ENCODE measurements at regions of chr18 and their contacts with region 1.

Region 1: DNA sequence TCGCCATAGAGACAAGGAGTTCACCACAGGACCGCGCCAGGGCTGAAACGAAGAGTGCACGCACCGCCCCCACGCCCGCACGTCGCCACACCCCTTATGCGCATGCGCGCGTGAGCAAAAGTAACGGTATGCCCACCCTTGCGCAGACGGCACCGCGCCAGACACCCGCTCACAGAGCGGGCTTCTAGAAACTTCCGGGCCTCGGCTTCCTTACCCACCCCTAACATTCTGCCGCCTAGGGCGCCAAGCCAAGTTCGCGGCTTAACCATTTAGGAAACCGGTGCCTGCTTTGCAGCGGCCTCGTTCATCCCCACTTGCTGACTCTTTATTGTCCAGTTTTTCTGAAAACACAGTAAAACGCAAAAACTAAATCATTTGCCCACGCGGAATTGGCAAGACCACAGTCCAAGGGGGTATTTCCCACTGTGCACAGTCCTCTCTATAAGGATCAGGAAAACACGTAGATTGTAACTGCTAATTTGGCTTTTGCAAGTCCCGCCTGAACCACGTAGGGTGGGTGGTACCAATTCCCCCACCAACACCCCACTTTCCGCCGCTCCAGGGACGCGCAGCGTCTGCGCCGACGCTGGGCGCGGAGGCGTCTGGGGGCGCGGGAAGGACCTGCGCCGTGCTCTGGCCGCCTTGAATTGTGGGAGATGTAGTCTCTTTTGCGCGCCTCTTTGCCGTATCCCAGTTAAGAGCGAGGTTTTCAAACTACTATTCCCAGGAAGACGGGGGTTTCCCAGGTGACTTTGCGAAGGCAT is at the starts of genes FBXO15 and TIMM21:
- DNase-seq: peak; percentile 94
- H3K4me3 Mint-ChIP-seq: peak within 1 kb of the TSS; percentile 92
- H3K27ac Mint-ChIP-seq: peak within 1 kb of the TSS; percentile 96
- H3K4me1 Mint-ChIP-seq: peaks cover 51% of the 10 kb centered on the region
- H3K27me3 Mint-ChIP-seq: peaks cover 8% of the 10 kb centered on the region
- total RNA-seq, gene FBXO15: 0.83 and 1.0 TPM in 2 replicates
- total RNA-seq, gene TIMM21: 54.1 and 60.2 TPM in 2 replicates

Region 2: DNA sequence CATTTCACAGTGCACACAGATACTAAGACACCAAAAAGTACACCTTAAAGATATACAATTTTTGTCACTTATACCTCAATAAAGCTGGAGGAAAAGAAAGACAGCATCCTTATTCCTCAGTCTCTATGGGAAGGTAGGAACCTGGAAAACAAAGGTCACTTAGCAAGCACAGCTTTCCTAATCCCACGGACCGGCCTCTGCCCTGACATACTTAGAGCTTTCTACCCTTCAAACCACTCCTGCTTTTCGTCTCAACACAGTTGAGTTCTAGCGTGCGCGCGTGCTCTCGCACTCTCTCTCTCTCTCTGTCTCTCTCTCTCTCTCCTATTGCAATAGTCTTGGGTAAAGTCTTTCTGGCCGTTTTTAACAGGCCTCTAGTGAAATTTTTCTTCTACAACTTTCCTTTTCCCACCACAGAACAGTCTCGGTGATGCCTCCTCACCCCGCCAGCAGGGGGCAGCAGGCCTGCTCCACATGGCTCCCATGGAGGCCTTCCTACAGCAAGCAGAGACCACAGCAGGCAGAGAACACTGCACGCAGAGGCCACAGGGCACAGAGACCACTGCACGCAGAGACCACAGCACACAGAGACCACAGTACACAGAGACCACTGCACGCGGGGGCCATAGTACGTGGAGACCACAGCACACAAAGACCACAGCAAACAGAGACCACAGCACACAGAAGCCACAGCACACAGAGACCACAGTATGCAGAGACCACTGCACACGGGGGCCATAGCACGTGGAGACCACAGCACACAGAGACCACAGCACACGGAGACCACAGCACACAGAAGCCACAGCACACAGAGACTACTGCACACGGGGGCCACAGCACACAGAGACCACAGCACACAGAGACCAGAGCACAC is 107.3 kb before region 1 on chr18:
- intact Hi-C with region 1: loop called (anchors 1 kb)
- DNase-seq: peak; percentile 62
- H3K4me3 Mint-ChIP-seq: no peak overlapping the region
- H3K27ac Mint-ChIP-seq: no peak overlapping the region
- H3K4me1 Mint-ChIP-seq: no peaks in the 10 kb centered on the region
- H3K27me3 Mint-ChIP-seq: no peaks in the 10 kb centered on the region

Region 3: DNA sequence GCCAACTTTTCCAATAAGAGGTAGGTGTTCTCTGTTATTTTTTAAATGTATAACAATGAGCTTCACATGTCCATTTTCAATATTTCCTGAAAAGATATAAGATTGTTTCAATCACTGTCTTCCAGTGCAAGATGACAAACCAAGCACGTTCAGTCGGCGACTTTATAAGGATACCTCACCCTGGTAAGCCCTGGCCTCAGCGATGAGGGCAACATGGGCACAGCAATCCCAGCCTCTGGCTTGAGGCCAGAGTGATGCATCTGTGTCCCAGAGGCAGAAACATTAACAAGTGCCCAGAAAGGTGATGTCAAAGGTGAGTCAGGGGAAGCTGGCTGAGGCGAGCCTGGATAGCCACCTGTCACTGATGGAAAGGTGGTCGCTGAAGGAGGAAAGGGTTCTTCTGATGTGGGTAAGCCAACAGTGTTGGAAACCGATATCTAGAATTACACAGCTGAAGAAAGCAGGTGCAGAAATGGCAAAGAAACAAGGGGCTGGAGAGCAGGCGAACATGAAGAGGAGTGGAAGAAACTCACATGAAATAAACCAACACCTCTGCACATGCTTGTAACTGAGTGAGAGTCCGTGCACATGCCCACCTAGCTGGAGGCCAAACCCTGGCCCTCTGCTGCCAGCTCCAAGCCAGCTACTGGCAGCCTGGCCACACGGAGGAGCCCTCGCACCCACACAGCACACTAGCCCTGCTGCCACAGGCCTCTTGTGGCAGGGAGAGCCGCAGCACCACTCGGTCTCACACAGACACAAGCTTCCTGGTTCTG is 65.8 kb before region 1 on chr18:
- intact Hi-C with region 1: loop called (anchors 1 kb)
- DNase-seq: peak; percentile 63
- H3K4me3 Mint-ChIP-seq: peak overlapping the region; percentile 85
- H3K27ac Mint-ChIP-seq: peak overlapping the region; percentile 97
- H3K4me1 Mint-ChIP-seq: peaks cover 24% of the 10 kb centered on the region
- H3K27me3 Mint-ChIP-seq: peaks cover 5% of the 10 kb centered on the region

Region 4: GRCh38 chr18:74196220-74197119 is 48.5 kb after region 1 on chr18:
- intact Hi-C with region 1: loop called (anchors 1 kb)
- DNase-seq: peak; percentile 17
- H3K4me3 Mint-ChIP-seq: peak overlapping the region; percentile 68
- H3K27ac Mint-ChIP-seq: no peak overlapping the region
- H3K4me1 Mint-ChIP-seq: peaks cover 7% of the 10 kb centered on the region
- H3K27me3 Mint-ChIP-seq: peaks cover 5% of the 10 kb centered on the region

Region 5: DNA sequence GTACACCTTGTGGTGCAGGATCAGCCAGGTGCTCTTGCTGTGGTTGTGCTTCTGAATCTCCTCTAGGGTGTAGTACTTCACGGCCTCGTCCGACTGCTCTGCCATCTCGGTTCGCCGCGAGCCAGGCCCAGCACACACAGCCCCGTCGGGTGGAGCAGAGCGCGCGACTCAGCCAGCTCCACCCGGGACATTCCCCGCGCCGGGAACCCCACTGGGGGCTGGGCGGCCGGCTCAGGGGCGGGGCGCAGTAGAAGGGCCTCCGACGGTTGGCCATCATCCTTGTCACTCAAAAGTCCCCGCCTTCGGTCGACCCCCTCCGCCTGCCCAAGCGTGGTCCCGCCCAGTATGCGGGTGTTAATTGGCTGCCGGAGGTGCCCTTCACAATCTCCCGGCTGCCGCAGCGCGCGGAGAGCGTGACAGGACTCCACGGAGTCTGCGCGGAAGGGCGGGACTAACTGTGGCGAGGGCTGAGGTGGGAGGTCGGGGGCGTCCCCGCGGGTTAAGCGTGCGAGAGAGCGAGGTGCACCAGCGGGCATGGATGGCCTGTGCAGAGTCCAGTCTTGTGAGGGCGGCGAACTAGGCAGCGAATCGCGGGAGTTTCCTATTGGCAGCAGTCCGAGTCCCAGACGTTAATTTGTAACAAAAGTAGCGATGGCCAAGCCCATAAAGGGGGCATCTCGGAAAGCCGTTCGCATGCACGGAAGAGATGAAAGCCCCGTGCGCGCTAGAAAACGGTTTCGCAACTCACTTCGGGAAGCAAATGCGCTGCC is 144.0 kb after region 1 on chr18 and contains the start of gene CYB5A:
- intact Hi-C with region 1: loop called (anchors 1 kb)
- DNase-seq: peak; percentile 97
- H3K4me3 Mint-ChIP-seq: no peak within 1 kb of the TSS
- H3K27ac Mint-ChIP-seq: peak within 1 kb of the TSS; percentile 90
- H3K4me1 Mint-ChIP-seq: peaks cover 14% of the 10 kb centered on the region
- H3K27me3 Mint-ChIP-seq: peaks cover 17% of the 10 kb centered on the region
- total RNA-seq, gene CYB5A: 36.0 and 40.5 TPM in 2 replicates

Region 6: DNA sequence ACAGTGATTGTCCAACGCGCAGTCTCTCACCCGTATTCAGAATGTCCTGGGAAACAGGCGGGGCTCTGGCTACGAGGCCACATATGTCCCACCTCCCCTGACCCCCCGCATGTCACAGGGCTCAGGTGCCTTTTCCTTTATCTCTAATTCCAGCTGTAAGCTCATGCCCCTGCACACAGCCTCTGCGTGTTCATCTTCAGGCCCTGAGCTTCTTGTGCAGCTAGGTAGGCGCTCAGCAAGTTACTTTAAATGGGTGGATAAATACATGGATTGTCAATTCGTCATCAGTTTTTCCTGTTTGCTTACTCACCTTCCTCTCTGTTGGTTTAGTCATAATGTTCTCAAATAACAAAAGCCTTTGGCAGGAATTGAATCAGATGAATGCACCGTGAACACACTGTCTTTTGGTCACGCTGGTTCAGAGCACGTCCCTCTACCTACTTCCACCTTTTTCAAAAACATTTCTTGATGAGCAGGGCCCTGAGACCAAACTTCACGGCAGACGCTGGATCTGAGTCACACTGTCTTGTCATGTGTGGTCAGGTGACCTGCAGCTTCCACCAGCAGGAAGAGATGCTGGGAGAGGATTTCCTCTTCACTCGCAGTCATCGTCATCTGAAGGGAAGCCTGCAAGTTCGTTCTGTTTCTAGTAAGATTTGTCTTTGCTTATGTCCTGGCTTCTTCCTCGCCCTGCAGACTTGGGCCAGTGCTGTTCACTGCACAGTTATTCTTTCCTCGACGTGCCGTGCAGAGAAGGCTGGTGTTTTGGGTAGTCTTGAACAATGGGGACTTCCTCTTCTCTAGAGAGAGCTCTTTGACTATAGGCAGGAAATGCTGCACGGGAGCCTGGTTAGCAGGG is 922.9 kb after region 1 on chr18:
- intact Hi-C with region 1: loop called (anchors 2 kb)
- DNase-seq: peak; percentile 70
- H3K4me3 Mint-ChIP-seq: peak overlapping the region; percentile 78
- H3K27ac Mint-ChIP-seq: peak overlapping the region; percentile 96
- H3K4me1 Mint-ChIP-seq: peaks cover 31% of the 10 kb centered on the region
- H3K27me3 Mint-ChIP-seq: no peaks in the 10 kb centered on the region